SK-N-SH (cell line): ENCODE measurements at regions of chr9 and their contacts with region 1.

Region 1: DNA sequence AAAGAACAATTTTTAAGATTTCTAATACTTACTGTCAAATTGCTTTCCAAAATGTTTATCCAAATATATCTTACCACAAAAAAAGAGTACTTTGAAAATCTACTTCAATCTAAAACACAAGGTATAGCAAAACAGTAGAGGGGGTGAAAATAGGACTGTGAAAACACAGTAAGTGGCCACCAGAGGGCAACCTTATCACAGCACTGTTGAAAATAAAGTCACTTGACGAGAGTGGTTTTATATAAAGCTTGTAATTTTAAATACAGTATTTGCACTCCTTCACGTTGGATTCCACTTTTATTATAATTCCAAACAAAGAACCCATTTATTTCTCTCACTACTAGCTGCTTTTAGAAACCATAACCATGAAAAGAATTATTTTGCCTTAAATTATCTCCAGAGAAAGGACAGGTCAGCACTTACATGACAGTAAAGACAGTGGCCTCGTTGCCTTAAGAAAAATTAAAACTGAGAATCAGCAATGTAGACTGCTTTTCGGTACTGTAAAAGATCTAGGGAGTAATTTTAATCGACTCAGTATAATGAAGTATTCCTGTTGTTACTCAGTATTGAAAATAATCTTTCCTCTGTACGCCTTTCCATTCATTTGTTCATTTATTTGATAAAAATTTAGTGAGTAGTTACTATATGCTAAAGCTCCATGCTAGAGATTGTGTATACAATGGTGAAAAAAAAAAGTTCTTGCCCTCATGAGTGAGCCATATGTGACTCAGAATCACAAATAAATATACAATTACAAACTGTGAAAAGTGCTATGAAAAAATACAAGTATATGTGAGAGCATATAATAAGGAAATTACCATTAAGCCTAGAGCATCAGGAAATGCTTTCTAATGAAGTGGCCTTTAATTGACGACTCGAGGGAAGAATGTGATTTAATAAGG is 40.0 kb upstream of the CDK5RAP2 start:
- DNase-seq: peak; percentile 67
- H3K4me3 ChIP-seq: peak overlapping the region in 1 of 2 experiments; percentile 36; a peak in 1 of 4 replicates
- H3K27ac ChIP-seq: no peak overlapping the region
- H3K4me1 ChIP-seq: peaks cover 0 to 17% of the 10 kb centered on the region in 2 experiments; a peak in 2 of 4 replicates
- H3K27me3 ChIP-seq: no peaks in the 10 kb centered on the region
- CTCF ChIP-seq: peak; percentile 95
- EP300 ChIP-seq: no peak
- RAD21 ChIP-seq: peak; percentile 92

Region 2: GRCh38 chr9:120702071-120702470 is 82.1 kb after region 1 on chr9:
- CTCF ChIA-PET with region 1: interaction called, 10 read pairs
- POLR2A ChIA-PET with region 1: no interaction called
- DNase-seq: no peak
- H3K4me3 ChIP-seq: no peak overlapping the region
- H3K27ac ChIP-seq: peak overlapping the region in 1 of 2 experiments; percentile 39; a peak in 1 of 4 replicates
- H3K4me1 ChIP-seq: peaks cover 9 to 18% of the 10 kb centered on the region in 2 experiments
- H3K27me3 ChIP-seq: no peaks in the 10 kb centered on the region
- CTCF ChIP-seq: no peak
- EP300 ChIP-seq: peak; percentile 36 to 73; a peak in 2 of 4 replicates
- RAD21 ChIP-seq: no peak

Region 3: GRCh38 chr9:120820095-120820494 is 200.1 kb after region 1 on chr9:
- CTCF ChIA-PET with region 1: no interaction called
- POLR2A ChIA-PET with region 1: no interaction called
- DNase-seq: no peak
- H3K4me3 ChIP-seq: no peak overlapping the region
- H3K27ac ChIP-seq: no peak overlapping the region
- H3K4me1 ChIP-seq: no peaks in the 10 kb centered on the region
- H3K27me3 ChIP-seq: no peaks in the 10 kb centered on the region
- CTCF ChIP-seq: no peak
- EP300 ChIP-seq: no peak
- RAD21 ChIP-seq: no peak

Region 4: GRCh38 chr9:120868676-120869359 is 248.8 kb after region 1 on chr9:
- CTCF ChIA-PET with region 1: no interaction called
- POLR2A ChIA-PET with region 1: no interaction called
- DNase-seq: peak; percentile 88
- H3K4me3 ChIP-seq: no peak overlapping the region
- H3K27ac ChIP-seq: no peak overlapping the region
- H3K4me1 ChIP-seq: no peaks in the 10 kb centered on the region
- H3K27me3 ChIP-seq: no peaks in the 10 kb centered on the region
- CTCF ChIP-seq: no peak
- EP300 ChIP-seq: no peak
- RAD21 ChIP-seq: no peak